RWPE1 (cell line): ENCODE measurements at regions of chr12 and their contacts with region 1.

Region 1: DNA sequence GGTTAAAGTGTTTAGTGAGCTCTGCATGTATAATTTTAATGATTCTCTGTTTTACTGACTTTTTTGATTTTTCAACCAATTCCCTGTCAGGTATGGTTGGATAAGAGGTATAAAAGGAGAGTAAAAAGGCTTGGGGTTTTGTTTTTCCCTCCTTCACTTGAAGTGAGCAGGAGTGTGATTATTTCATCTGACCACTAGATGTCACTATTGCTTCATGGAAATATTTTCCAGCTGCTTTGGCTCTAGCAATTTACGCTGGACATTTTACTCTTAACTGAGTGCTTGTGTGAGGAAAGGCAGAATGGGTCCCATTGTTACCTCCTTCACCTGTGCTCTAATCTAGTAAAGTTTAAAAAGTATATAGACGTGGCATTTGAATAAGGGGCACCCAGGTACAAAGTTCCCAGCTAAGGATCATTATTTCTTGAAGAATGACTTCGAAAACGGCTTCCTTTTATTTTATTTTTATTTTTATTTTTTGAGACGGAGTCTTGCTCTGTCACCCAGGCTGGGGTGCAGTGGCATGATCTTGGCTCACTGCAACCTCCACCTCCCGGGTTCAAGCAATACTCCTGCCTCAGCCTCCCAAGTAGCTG is 66.5 kb downstream of the TBC1D30 start:
- DNase-seq: peak; percentile 57
- H3K27ac ChIP-seq: no peak overlapping the region
- CTCF ChIP-seq: peak; percentile 75

Region 2: DNA sequence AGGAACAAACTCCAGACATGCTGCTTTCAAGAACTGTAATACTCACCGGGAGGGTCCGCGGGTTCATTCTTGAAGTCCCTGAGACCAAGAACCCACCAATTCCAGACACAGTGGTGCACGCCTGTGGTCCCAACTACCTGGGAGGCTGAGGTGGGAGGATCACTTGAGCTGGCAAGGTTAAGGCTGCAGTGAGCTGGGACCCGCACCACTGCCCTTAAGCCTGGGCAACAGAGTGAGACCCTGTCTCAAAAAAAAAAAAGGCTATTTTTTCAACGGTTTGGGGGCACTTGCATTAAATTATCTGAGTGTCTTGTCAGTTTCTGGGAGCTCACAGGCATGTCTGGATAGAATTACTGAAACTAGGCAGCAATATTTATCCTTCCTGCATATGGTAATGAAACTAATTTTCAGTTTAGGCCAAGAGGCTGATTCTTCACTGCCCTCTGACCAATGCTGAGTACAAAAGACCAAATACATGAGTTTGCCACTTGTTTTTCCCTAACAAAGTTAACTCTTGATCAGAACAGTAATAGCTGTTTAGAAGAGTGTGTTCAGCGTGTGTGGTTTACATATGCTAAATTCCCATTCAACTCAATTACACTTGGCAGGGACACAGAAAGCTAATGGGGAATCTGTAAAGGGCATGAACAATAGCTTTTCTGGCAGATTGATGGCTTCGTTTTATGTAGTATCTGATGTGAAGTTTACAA is 346.4 kb before region 1 on chr12:
- CTCF ChIA-PET with region 1: no interaction called
- POLR2A ChIA-PET with region 1: no interaction called
- DNase-seq: no peak
- H3K27ac ChIP-seq: no peak overlapping the region
- CTCF ChIP-seq: no peak

Region 3: GRCh38 chr12:65106948-65107347 is 216.0 kb after region 1 on chr12:
- CTCF ChIA-PET with region 1: interaction called, 22 read pairs
- POLR2A ChIA-PET with region 1: no interaction called
- DNase-seq: peak; percentile 16
- H3K27ac ChIP-seq: no peak overlapping the region
- CTCF ChIP-seq: peak; percentile 52

Region 4: DNA sequence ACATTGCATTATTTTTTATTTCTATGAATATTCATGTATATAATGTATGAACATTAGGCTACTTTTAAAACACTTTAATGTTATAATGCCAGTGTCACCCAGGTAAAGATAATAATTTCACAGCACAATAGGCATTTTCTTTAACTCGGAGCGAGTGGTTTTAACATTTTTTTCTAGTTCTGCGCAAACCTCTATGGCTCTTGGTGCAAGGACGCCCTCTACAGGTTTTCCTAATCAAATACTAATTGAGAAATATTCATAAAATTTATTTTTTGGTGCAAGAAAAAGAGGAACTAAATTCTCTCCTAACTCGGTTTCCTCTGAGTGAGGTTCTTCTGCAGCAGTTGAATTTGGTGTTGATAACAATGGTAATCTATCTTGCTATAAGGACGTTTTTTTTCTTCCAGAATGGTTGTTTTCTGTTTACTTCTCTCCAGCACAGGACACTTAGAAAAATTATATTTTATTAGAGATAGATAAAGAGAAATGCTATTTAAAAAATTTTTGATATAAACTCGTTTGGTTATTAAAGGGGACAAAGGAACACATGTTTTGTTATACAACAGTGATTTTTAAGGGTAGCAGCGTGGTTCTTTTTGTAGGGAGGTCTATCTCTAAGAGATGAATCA is 232.6 kb after region 1 on chr12:
- CTCF ChIA-PET with region 1: interaction called, 17 read pairs
- POLR2A ChIA-PET with region 1: no interaction called
- DNase-seq: peak; percentile 6
- H3K27ac ChIP-seq: no peak overlapping the region
- CTCF ChIP-seq: peak; percentile 80

Region 5: GRCh38 chr12:65232476-65233077 is 341.6 kb after region 1 on chr12:
- CTCF ChIA-PET with region 1: interaction called, 10 read pairs
- POLR2A ChIA-PET with region 1: no interaction called
- DNase-seq: peak; percentile 9
- H3K27ac ChIP-seq: no peak overlapping the region
- CTCF ChIP-seq: peak; percentile 49